ENCODE measurements at regions of chr4 and their contacts with region 1.

Region 1: DNA sequence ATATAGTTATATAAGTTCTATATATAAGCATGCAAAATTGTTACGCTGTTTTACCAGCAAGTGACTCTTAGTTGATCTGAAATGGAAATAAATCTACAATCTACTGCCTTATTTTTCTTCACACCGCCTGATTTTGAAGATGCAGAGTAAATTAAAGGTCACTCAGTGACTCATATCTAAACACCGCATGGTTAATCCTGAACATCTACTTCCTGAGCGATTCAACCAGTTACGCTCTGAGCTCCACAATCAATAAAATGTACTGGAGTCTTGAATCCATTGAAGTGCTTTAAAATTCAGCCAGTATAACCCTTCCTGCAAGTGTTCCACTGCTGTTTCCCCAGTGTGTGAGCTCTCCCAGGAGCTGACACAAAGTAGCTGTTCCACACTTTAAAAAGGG is 192.8 kb downstream of the SLC7A11 start:
- ATAC-seq: no peak
- H3K4me3 ChIP-seq: no peak overlapping the region
- H3K27ac ChIP-seq: no peak overlapping the region
- H3K4me1 ChIP-seq: peaks cover 21 to 40% of the 10 kb centered on the region in 2 donors

Region 2: DNA sequence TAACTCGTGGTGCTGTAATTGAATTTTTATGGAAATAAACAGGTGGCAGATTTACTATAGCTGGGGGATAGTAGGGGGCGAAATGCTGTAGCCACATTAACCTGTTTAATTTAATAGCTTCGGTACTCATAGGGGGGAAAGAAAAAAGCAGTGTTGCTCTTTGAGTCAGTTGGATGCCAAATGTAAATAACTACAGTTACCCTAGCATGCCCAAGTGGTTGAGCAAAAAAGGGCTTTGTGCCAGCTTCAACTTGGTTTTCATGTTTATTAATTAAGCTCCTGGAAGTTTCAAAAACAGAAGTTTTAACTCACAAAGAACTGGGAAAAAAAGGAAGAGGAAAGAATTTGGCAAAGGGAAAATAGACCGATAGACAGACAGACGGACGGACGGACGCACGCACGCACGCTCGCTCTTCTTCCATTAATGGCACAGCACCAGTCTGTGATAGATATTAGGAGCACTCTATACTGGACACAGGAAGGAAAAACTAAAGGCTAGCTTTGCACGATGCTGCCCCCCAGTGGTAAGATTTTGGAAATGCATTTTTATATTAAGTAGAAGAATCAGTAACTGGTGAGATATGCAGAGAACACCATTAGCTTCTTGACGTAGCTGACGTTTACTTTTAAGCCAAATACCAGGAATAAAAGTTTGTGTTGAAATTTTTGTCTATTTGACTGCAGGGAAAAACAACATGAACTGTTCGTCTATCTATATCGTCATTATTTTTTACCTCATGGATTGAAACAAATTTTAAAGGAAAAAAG is 41.0 kb after region 1 on chr4:
- in situ Hi-C with region 1: loop called in 1 of 9 experiments (anchors 10 kb)
- ATAC-seq: peak; percentile 78 to 91 (median 90)
- H3K4me3 ChIP-seq: peak overlapping the region in 1 of 5 donors; percentile 21
- H3K27ac ChIP-seq: no peak overlapping the region
- H3K4me1 ChIP-seq: peaks cover 0 to 14% of the 10 kb centered on the region in 2 donors